PC-3 (cell line): ENCODE measurements at regions of chr11 and their contacts with region 1.

Region 1: DNA sequence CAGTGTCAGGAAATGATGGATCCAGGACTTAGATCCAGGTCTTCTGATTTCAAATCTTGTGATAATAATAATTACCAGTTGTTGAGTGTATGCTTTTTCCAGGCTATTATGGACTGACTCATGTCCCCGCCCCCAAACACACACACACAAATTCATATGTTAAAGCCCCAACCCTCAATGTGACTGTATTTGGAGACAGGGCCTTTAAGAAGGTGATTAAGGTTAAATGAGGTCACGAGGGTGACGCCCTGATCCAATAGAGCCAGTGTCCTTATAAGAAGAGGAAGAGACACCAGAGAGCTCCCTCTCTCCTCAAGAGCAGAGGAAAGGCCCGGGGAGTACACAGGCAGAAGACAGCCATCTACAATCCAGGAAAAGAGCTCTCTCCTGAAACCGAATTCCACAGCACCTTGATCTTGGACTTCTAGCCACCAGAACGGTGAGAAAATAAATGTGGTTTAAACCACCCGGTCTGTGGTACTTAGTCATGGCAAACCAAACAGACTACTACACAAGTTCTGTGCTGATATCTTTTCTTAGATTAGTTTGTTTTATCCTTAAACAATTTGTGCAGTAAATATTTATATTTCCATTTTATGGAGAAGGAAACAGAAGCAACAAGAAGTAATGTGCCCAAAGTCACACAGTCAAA is 8.2 kb downstream of the TMPRSS5 start:
- DNase-seq: peak; percentile 82
- ATAC-seq: peak; percentile 91
- H3K4me3 ChIP-seq: no peak overlapping the region
- H3K27ac ChIP-seq: peak overlapping the region; percentile 56
- H3K4me1 ChIP-seq: peaks cover 20% of the 10 kb centered on the region
- H3K27me3 ChIP-seq: no peaks in the 10 kb centered on the region
- CTCF ChIP-seq: no peak

Region 2: DNA sequence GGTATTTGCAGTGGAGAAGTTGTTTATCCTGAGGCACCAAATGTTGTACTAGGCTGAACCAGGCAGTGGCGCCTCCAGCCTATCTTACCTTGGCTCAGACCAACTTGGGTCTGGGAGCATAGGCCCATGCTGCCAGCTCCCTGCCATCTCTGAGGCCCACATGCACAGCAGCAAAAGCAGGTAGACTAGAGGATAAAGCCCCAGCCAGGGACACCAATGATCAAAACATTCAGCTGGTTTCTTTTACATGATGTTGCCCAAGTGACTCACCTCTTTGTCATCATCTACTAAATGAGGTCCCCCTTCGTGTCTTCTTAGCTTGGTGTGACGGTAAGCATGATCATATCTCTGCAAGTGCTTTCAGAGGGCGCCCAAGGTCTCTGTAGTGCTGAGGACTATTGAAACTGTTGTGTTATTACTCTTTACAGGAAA is 110.6 kb before region 1 on chr11:
- CTCF ChIA-PET with region 1: no interaction called
- POLR2A ChIA-PET with region 1: no interaction called
- intact Hi-C with region 1: loop called (anchors 1 kb)
- DNase-seq: peak; percentile 89
- ATAC-seq: peak; percentile 78
- H3K4me3 ChIP-seq: no peak overlapping the region
- H3K27ac ChIP-seq: no peak overlapping the region
- H3K4me1 ChIP-seq: peaks cover 13% of the 10 kb centered on the region
- H3K27me3 ChIP-seq: peaks cover 10% of the 10 kb centered on the region; the same call in 1 of the 2 replicates
- CTCF ChIP-seq: peak; percentile 9; the same call in 1 of the 2 replicates

Region 3: GRCh38 chr11:113715882-113716625 is 18.2 kb after region 1 on chr11:
- CTCF ChIA-PET with region 1: no interaction called
- POLR2A ChIA-PET with region 1: no interaction called
- intact Hi-C with region 1: loop called (anchors 2 kb)
- DNase-seq: no peak
- ATAC-seq: no peak
- H3K4me3 ChIP-seq: no peak overlapping the region
- H3K27ac ChIP-seq: no peak overlapping the region
- H3K4me1 ChIP-seq: no peaks in the 10 kb centered on the region
- H3K27me3 ChIP-seq: no peaks in the 10 kb centered on the region
- CTCF ChIP-seq: no peak

Region 4: DNA sequence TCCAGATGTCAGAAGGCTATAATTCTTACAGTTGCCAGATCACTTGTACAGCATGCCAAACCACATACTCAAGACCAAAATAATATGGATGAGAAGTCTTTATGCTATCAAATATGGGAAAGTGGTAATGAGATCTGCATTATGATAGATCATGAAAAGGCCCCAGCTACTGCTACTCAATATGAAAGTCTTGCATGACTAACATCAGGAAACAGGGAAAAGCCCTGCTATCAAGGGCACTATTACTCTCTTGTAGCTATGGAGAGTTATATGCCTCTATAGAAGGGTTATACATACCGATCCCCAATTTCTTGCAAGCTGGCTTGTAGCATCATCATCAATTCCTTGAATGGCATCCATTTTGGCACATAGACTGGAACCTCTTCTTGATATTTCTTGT is 38.4 kb after region 1 on chr11:
- CTCF ChIA-PET with region 1: no interaction called
- POLR2A ChIA-PET with region 1: no interaction called
- intact Hi-C with region 1: no loop called
- DNase-seq: no peak
- ATAC-seq: no peak
- H3K4me3 ChIP-seq: no peak overlapping the region
- H3K27ac ChIP-seq: no peak overlapping the region
- H3K4me1 ChIP-seq: no peaks in the 10 kb centered on the region
- H3K27me3 ChIP-seq: no peaks in the 10 kb centered on the region
- CTCF ChIP-seq: no peak

Region 5: GRCh38 chr11:114110952-114111947 is 413.4 kb after region 1 on chr11:
- CTCF ChIA-PET with region 1: no interaction called
- POLR2A ChIA-PET with region 1: no interaction called
- intact Hi-C with region 1: no loop called
- DNase-seq: no peak
- ATAC-seq: no peak
- H3K4me3 ChIP-seq: no peak overlapping the region
- H3K27ac ChIP-seq: no peak overlapping the region
- H3K4me1 ChIP-seq: no peaks in the 10 kb centered on the region
- H3K27me3 ChIP-seq: peaks cover 98% of the 10 kb centered on the region
- CTCF ChIP-seq: no peak